A549 (cell line): ENCODE measurements at regions of chr20 and their contacts with region 1.

Region 1: DNA sequence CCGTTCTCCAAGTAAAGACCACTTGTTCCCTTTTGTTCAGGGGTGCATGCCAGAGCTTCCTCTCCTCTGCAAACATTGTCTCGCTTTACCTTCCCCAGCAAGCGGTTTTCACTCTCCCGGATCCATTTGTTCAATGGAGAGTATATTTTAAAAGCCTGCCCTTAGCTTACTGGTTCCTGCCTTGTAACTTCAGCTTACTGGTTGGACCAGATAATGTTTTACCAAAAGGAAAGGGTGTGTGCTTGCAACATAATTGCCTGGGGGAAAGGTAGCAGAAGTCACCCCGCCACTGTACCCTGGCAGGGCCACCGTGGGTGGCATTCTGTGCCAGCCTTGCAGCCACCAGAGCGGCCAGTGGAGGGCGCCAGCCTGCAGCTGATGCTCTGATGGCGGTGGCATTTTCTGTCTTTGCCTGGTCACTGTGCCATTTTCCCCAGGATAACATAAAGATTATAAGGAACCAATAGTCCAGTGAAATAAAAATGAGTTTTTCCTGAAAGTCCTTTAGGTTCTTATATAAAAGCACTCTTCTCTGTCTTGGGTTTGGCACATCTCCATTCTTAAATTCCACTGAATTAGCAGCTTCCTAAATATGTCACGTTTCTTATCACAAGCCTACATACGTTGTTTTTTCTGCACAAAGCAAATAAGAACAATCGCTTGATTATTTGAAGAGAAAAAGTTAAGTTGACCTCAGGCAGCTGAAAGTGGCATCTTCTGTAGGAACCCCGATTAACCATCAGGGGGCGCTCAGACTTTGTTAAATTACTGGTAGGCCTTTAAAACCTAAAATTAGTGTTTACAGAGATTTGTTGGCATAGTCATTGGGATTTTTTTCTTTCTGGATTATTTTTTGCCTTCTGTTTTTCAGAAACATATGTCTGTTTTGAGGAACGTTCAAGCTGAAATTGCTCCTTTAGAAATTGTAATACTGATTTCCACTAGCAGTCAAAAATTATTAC is 67.4 kb upstream of the XRN2 start:
- DNase-seq: peak; percentile 50 to 78
- ATAC-seq: peak; percentile 90 to 92
- H3K4me3 ChIP-seq: no peak overlapping the region
- H3K27ac ChIP-seq: no peak overlapping the region
- H3K4me1 ChIP-seq: peaks cover 6% of the 10 kb centered on the region; the same call in 1 of the 3 replicates
- CTCF ChIP-seq: peak; percentile 98
- EP300 ChIP-seq: no peak
- POLR2A ChIP-seq: no peak
- RAD21 ChIP-seq: peak; percentile 78 to 85

Region 2: DNA sequence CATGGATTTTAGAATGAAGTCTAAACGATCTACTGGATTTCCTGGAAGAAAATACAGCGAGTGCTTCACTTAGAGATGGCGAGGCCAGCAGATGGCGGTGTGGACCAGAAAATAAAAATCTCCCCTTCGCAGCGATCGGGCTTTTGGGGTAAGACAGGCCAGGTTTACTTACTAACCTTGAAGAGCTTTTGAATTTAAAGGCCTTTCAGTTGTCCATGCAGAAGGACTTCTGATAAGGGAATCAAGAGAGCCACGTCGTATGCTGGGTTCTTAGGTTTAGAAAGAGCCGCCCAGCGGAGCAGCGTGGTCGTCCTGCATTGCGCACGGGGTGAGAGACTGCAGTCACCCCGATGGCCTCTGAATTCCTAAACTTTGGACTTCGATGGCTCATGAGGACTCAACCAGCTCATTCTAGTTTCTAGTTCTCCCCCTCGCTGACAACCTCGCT is 398.2 kb before region 1 on chr20:
- CTCF ChIA-PET with region 1: interaction called, 27 read pairs
- POLR2A ChIA-PET with region 1: interaction called, 4 read pairs
- DNase-seq: peak; percentile 59 to 65
- ATAC-seq: peak; percentile 80 to 89; a peak in 5 of 6 replicates
- H3K4me3 ChIP-seq: no peak overlapping the region
- H3K27ac ChIP-seq: no peak overlapping the region
- H3K4me1 ChIP-seq: no peaks in the 10 kb centered on the region
- CTCF ChIP-seq: peak; percentile 85
- EP300 ChIP-seq: no peak
- POLR2A ChIP-seq: no peak
- RAD21 ChIP-seq: peak; percentile 85 to 89

Region 3: GRCh38 chr20:21074605-21075336 is 161.0 kb before region 1 on chr20:
- CTCF ChIA-PET with region 1: no interaction called
- POLR2A ChIA-PET with region 1: no interaction called
- DNase-seq: no peak
- ATAC-seq: peak in 1 of 2 experiments; percentile 54; a peak in 1 of 6 replicates
- H3K4me3 ChIP-seq: no peak overlapping the region
- H3K27ac ChIP-seq: no peak overlapping the region
- H3K4me1 ChIP-seq: no peaks in the 10 kb centered on the region
- CTCF ChIP-seq: no peak
- EP300 ChIP-seq: no peak
- POLR2A ChIP-seq: no peak
- RAD21 ChIP-seq: no peak

Region 4: DNA sequence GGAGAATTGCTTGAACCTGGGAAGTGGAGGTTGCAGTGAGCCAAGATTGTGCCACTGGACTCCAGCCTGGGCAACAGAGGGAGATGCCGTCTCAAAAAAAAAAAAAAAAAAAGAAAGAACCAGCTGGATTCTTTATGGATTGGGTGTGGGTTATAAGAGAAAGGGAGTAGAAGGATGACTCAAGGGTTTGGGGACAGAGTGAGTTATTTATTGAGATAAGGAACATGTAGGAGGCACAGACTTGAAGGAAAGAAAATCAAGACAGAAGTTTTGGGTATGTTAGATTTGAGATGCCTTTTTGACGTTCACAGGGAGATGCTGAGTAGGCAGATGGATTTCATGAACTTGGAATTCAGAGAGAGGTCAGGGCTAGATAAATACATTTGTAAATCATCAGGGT is 62.3 kb before region 1 on chr20:
- CTCF ChIA-PET with region 1: interaction called, 17 read pairs
- POLR2A ChIA-PET with region 1: no interaction called
- DNase-seq: no peak
- ATAC-seq: no peak
- H3K4me3 ChIP-seq: no peak overlapping the region
- H3K27ac ChIP-seq: no peak overlapping the region
- H3K4me1 ChIP-seq: no peaks in the 10 kb centered on the region
- CTCF ChIP-seq: no peak
- EP300 ChIP-seq: no peak
- POLR2A ChIP-seq: no peak
- RAD21 ChIP-seq: no peak

Region 5: DNA sequence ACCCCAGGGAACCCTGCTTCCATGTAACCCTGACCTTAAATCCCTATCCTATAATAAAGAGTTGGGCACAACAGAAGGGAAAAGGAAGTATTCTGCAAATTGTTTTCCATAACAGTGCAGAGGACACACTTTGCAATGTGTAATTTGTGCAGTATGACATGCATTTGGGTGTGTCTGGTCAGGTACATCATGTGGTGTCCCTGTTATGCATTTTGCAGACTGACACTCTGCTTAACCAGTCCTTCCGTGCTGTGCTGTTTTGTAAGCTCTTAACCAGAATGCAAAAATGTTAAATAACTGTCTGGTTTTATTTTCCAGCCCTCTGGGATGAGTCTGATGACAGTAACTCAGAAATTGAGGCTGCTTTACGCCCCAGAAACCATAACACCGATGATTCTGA is 10.4 kb after region 1 on chr20:
- CTCF ChIA-PET with region 1: interaction called, 49 read pairs
- POLR2A ChIA-PET with region 1: no interaction called
- DNase-seq: no peak
- ATAC-seq: no peak
- H3K4me3 ChIP-seq: no peak overlapping the region
- H3K27ac ChIP-seq: no peak overlapping the region
- H3K4me1 ChIP-seq: no peaks in the 10 kb centered on the region
- CTCF ChIP-seq: no peak
- EP300 ChIP-seq: no peak
- POLR2A ChIP-seq: no peak
- RAD21 ChIP-seq: no peak

Region 6: DNA sequence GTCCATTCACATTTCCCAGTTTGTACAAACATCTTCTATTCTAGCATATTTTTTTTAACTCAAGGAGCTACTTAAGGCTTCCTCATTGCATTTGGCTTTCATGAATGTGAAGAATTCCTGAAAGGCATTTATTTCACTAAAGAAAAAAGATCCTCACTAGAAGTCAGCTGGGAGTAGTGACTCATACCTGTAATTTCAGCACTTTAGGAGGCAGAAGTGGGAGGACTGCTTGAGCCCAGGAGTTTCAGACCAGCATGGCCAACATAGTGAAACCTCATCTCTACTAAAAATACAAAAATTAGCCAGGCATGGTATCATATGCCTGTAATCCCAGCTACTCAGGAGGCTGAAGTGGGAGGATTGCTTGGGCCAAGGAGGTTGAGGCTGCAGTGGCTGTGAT is 36.5 kb after region 1 on chr20:
- CTCF ChIA-PET with region 1: interaction called, 36 read pairs
- POLR2A ChIA-PET with region 1: no interaction called
- DNase-seq: no peak
- ATAC-seq: no peak
- H3K4me3 ChIP-seq: no peak overlapping the region
- H3K27ac ChIP-seq: no peak overlapping the region
- H3K4me1 ChIP-seq: no peaks in the 10 kb centered on the region
- CTCF ChIP-seq: no peak
- EP300 ChIP-seq: no peak
- POLR2A ChIP-seq: no peak
- RAD21 ChIP-seq: no peak

Region 7: GRCh38 chr20:21381619-21382018 is 145.9 kb after region 1 on chr20:
- CTCF ChIA-PET with region 1: interaction called, 11 read pairs
- POLR2A ChIA-PET with region 1: interaction called, 3 read pairs
- DNase-seq: no peak
- ATAC-seq: no peak
- H3K4me3 ChIP-seq: no peak overlapping the region
- H3K27ac ChIP-seq: no peak overlapping the region
- H3K4me1 ChIP-seq: no peaks in the 10 kb centered on the region
- CTCF ChIP-seq: no peak
- EP300 ChIP-seq: no peak
- POLR2A ChIP-seq: no peak
- RAD21 ChIP-seq: no peak

Region 8: DNA sequence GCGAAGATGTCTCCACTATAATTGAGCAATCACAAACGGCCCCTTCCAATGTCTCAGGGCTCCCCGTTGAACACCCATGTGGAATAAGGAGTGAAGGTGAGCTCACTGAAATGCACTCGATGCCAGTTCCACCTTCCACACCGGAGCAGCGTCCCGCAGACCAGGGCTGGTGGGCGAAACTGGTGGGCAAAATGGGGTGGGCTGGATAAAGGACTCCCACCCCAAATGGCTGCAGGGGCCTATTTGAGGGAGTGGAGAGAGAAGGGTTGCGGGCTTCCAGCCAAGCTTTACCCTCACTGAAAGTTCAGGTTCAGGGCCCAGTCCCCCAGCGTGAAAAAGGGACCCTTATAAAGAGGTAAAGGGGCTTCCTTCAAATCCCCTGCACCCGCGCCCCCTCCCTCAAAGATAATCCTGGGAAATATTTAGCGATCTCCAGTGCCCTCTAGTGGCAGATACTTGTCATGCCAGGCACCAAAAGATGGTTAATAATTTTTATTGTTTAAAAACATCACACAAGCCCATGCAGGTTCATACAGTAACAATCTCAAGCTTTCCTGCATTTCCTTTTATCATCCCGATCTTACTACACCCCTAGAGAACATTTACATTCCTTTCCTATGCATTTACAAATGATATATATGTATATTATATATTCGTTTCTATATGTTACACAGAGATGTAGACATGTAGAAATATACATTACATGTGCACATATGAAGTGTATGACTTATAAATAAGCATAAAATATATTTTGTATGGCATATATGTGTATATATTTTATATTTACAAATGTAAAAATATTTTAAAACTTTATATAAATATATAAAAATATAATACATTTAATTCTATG is 336.3 kb after region 1 on chr20:
- CTCF ChIA-PET with region 1: interaction called, 22 read pairs
- POLR2A ChIA-PET with region 1: no interaction called
- DNase-seq: no peak
- ATAC-seq: peak in 1 of 2 experiments; percentile 45; a peak in 2 of 6 replicates
- H3K4me3 ChIP-seq: no peak overlapping the region
- H3K27ac ChIP-seq: no peak overlapping the region
- H3K4me1 ChIP-seq: no peaks in the 10 kb centered on the region
- CTCF ChIP-seq: peak; percentile 88
- EP300 ChIP-seq: no peak
- POLR2A ChIP-seq: no peak
- RAD21 ChIP-seq: peak; percentile 77 to 81